Vagina (tissue), 2 donors: ENCODE measurements at regions of chr4 and their contacts with region 1.

Region 1: GRCh38 chr4:17024425-17024824 is 126.0 kb upstream of the LDB2 start:
- DNase-seq: no peak
- H3K4me3 ChIP-seq: no peak overlapping the region
- H3K27ac ChIP-seq: no peak overlapping the region
- H3K4me1 ChIP-seq: no peaks in the 10 kb centered on the region
- H3K27me3 ChIP-seq: no peaks in the 10 kb centered on the region
- CTCF ChIP-seq: no peak
- POLR2A ChIP-seq: no peak

Region 2: GRCh38 chr4:15873117-15873516 is 1151.3 kb before region 1 on chr4:
- intact Hi-C with region 1: loop called (anchors 5 kb)
- DNase-seq: no peak
- H3K4me3 ChIP-seq: no peak overlapping the region
- H3K27ac ChIP-seq: no peak overlapping the region
- H3K4me1 ChIP-seq: no peaks in the 10 kb centered on the region
- H3K27me3 ChIP-seq: no peaks in the 10 kb centered on the region
- CTCF ChIP-seq: no peak
- POLR2A ChIP-seq: no peak

Region 3: GRCh38 chr4:16931339-16932305 is 92.8 kb before region 1 on chr4:
- intact Hi-C with region 1: no loop called
- DNase-seq: no peak
- H3K4me3 ChIP-seq: no peak overlapping the region
- H3K27ac ChIP-seq: no peak overlapping the region
- H3K4me1 ChIP-seq: no peaks in the 10 kb centered on the region
- H3K27me3 ChIP-seq: no peaks in the 10 kb centered on the region
- CTCF ChIP-seq: no peak
- POLR2A ChIP-seq: no peak

Region 4: DNA sequence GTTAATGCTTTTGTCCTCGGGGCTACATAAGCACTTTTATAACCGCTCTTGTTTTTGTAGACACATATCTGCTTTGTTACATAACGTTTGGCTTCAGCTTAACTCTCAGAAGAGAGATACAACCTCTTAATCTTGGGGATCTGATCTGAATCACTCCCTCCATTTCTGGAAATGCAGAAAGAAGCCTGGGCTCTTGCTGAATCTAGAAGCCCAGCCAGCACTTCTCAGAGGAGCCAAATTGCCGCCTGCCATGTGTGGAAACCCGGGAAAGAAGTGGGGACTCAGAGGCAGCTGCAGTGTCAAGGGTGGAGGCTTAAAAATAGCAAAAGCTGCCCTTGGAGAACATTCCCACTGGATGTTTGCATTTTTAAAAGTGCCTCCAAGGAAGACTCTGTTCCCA is 56.7 kb before region 1 on chr4:
- intact Hi-C with region 1: no loop called
- DNase-seq: no peak
- H3K4me3 ChIP-seq: no peak overlapping the region
- H3K27ac ChIP-seq: peak overlapping the region; percentile 36
- H3K4me1 ChIP-seq: peaks cover 24% of the 10 kb centered on the region
- H3K27me3 ChIP-seq: no peaks in the 10 kb centered on the region
- CTCF ChIP-seq: no peak
- POLR2A ChIP-seq: no peak

Region 5: DNA sequence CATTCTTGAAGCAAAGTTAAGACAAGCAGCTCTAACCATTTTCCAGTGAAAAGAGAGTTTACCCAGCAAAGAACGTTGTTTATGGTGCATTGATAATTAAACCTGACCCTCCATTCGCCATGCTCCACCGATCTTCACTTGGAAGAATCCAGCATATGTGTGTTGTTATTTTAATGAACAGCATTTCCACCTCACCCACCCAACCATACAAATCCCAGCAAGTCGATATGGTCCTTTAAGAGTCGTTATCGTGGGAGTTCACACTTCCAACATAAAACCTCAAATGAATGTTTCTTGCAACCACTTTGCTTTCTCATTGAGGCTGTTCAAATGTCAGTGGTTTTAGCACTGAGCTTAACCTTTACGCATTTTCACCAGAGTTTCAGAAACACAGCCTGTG is 21.4 kb after region 1 on chr4:
- intact Hi-C with region 1: no loop called
- DNase-seq: no peak
- H3K4me3 ChIP-seq: no peak overlapping the region
- H3K27ac ChIP-seq: no peak overlapping the region
- H3K4me1 ChIP-seq: no peaks in the 10 kb centered on the region
- H3K27me3 ChIP-seq: no peaks in the 10 kb centered on the region
- CTCF ChIP-seq: no peak
- POLR2A ChIP-seq: no peak

Region 6: GRCh38 chr4:17174751-17175150 is 150.3 kb after region 1 on chr4:
- intact Hi-C with region 1: no loop called
- DNase-seq: no peak
- H3K4me3 ChIP-seq: no peak overlapping the region
- H3K27ac ChIP-seq: no peak overlapping the region
- H3K4me1 ChIP-seq: peaks cover 1% of the 10 kb centered on the region
- H3K27me3 ChIP-seq: no peaks in the 10 kb centered on the region
- CTCF ChIP-seq: no peak
- POLR2A ChIP-seq: no peak